ENCODE measurements at regions of chr11 and their contacts with region 1.

Region 1: GRCh38 chr11:17972987-17973386 is 39.9 kb downstream of the SERGEF start:
- DNase-seq: peak; percentile 44
- H3K4me3 ChIP-seq: no peak overlapping the region
- H3K27ac ChIP-seq: no peak overlapping the region
- H3K4me1 ChIP-seq: no peaks in the 10 kb centered on the region
- H3K27me3 ChIP-seq: no peaks in the 10 kb centered on the region
- CTCF ChIP-seq: peak; percentile 56 to 77
- POLR2A ChIP-seq: no peak

Region 2: DNA sequence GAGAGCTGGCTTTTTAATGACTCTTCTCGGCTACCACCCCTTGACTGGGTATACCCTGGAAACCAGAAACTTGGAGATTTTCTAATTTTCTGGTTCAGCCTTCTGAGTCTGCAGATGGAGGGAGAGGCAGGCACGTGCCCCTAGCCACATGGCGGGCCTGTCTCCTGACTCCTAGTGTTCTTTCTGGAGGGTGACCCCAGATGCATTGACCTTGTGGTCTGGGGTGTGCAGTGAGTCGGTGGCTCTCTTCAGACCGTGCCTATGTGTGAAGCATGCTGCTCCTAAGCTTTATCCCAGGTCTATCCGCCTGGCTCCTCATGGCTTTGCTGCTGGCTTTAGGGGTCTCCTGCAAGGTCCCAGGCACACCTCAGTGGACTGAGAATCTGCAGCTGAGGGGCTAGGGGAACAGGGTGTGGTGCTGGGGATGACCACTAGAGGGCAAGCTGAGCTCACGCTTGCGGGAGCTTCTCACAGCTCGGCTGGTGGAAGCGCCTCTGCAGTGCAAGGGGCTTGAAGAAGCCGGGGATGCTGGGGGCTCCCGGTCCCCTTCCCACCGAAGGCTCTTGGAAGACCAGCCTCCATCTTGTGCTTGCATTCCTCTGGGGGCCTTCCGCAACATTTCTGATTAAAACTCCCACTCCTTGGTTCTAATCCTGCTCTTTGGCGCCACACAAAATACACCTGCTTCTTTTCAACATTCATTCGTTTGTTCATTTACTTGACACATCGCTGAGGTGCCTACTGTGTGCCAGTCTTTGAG is 374.1 kb before region 1 on chr11:
- CTCF ChIA-PET with region 1: interaction called, 58 read pairs
- POLR2A ChIA-PET with region 1: no interaction called
- dilution Hi-C with region 1: no loop called
- intact Hi-C with region 1: loop called (anchors 1 kb)
- DNase-seq: peak; percentile 61
- H3K4me3 ChIP-seq: no peak overlapping the region
- H3K27ac ChIP-seq: no peak overlapping the region
- H3K4me1 ChIP-seq: no peaks in the 10 kb centered on the region
- H3K27me3 ChIP-seq: no peaks in the 10 kb centered on the region
- CTCF ChIP-seq: peak; percentile 86 to 98
- POLR2A ChIP-seq: no peak

Region 3: DNA sequence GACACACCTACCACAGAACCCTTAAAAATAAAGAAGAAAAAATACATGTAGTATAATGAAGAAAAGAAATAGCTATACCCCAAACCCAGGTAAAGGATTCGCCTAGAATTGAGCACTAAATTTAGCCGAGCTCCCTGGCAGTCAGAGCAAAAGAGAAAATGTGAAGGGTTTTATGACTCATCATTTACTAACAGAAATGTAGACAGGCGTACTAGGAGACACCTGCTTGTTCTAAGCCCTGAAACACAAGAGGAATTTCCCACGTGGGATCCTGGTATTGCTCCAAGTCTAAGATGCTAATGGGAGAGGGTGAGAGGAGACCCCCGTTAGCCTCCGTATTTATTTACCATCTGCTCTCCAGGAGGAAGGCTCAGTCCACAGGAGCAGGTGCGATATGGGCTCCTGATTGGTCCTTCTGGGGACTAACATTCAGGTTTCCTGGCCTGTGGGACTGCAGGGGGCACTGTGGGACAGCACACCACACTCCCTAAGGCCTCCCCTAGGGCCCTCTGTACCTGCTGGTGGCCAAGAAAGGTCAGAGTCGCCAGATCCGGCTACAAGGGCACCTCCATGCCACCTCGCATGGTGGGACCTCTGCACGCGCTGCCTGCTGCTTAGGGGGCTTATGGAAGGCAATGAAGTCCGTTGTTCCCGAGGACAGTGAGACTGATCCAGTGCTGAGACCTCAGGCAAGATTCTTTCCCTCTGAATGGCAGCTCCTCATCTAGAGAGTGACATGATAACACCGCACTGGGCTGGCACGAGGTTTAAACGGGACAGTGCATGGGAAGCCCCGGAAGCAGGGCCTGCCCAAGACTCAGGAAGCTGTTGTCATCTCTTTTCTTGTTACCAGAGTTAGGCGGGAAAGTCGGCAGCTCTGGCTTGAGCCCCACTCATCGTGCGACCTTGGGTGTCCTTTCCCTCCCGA is 212.6 kb before region 1 on chr11:
- CTCF ChIA-PET with region 1: interaction called, 74 read pairs
- POLR2A ChIA-PET with region 1: no interaction called
- dilution Hi-C with region 1: no loop called
- intact Hi-C with region 1: loop called (anchors 1 kb)
- DNase-seq: peak; percentile 49
- H3K4me3 ChIP-seq: no peak overlapping the region
- H3K27ac ChIP-seq: no peak overlapping the region
- H3K4me1 ChIP-seq: no peaks in the 10 kb centered on the region
- H3K27me3 ChIP-seq: no peaks in the 10 kb centered on the region
- CTCF ChIP-seq: peak; percentile 41 to 73
- POLR2A ChIP-seq: no peak

Region 4: GRCh38 chr11:17770048-17770652 is 202.8 kb before region 1 on chr11:
- CTCF ChIA-PET with region 1: interaction called, 16 read pairs
- POLR2A ChIA-PET with region 1: no interaction called
- dilution Hi-C with region 1: no loop called
- intact Hi-C with region 1: no loop called
- DNase-seq: no peak
- H3K4me3 ChIP-seq: no peak overlapping the region
- H3K27ac ChIP-seq: no peak overlapping the region
- H3K4me1 ChIP-seq: no peaks in the 10 kb centered on the region
- H3K27me3 ChIP-seq: no peaks in the 10 kb centered on the region
- CTCF ChIP-seq: no peak
- POLR2A ChIP-seq: no peak